ENCODE measurements at regions of chr17 and their contacts with region 1.

Region 1: GRCh38 chr17:43125133-43125966 is at the start of gene BRCA1:
- DNase-seq: peak; percentile 97
- H3K4me3 ChIP-seq: peak within 1 kb of the TSS; percentile 66
- H3K27ac ChIP-seq: peak within 1 kb of the TSS; percentile 84
- H3K4me1 ChIP-seq: peaks cover 3% of the 10 kb centered on the region
- H3K27me3 ChIP-seq: no peaks in the 10 kb centered on the region
- CTCF ChIP-seq: no peak
- total RNA-seq, gene BRCA1: 24.2 and 32.9 TPM in 2 replicates

Region 2: GRCh38 chr17:43024407-43025289 is 100.7 kb before region 1 on chr17 and contains the start of gene RND2:
- CTCF ChIA-PET with region 1: no interaction called
- POLR2A ChIA-PET with region 1: no interaction called
- intact Hi-C with region 1: loop called (anchors 10 kb)
- DNase-seq: peak; percentile 94
- H3K4me3 ChIP-seq: peak within 1 kb of the TSS; percentile 55
- H3K27ac ChIP-seq: peak within 1 kb of the TSS; percentile 77
- H3K4me1 ChIP-seq: no peaks in the 10 kb centered on the region
- H3K27me3 ChIP-seq: no peaks in the 10 kb centered on the region
- CTCF ChIP-seq: peak; percentile 62
- total RNA-seq, gene RND2: 5.5 and 6.7 TPM in 2 replicates

Region 3: GRCh38 chr17:43140396-43141332 is 15.3 kb after region 1 on chr17:
- CTCF ChIA-PET with region 1: no interaction called
- POLR2A ChIA-PET with region 1: no interaction called
- intact Hi-C with region 1: no loop called
- DNase-seq: no peak
- H3K4me3 ChIP-seq: no peak overlapping the region
- H3K27ac ChIP-seq: no peak overlapping the region
- H3K4me1 ChIP-seq: no peaks in the 10 kb centered on the region
- H3K27me3 ChIP-seq: no peaks in the 10 kb centered on the region
- CTCF ChIP-seq: no peak

Region 4: GRCh38 chr17:43170766-43171585 is 45.6 kb after region 1 on chr17 and contains the start of gene NBR1:
- CTCF ChIA-PET with region 1: no interaction called
- POLR2A ChIA-PET with region 1: no interaction called
- intact Hi-C with region 1: loop called (anchors 5 kb)
- DNase-seq: peak; percentile 95
- H3K4me3 ChIP-seq: peak within 1 kb of the TSS; percentile 62
- H3K27ac ChIP-seq: peak within 1 kb of the TSS; percentile 82
- H3K4me1 ChIP-seq: peaks cover 9% of the 10 kb centered on the region
- H3K27me3 ChIP-seq: no peaks in the 10 kb centered on the region
- CTCF ChIP-seq: 0 out of 2 replicates have a peak, but pooled peaks have one; percentile 10
- total RNA-seq, gene NBR1: 19.5 and 23.0 TPM in 2 replicates

Measured in A673 (cell line).